A673 (cell line): ENCODE measurements at regions of chr5 and their contacts with region 1.

Region 1: DNA sequence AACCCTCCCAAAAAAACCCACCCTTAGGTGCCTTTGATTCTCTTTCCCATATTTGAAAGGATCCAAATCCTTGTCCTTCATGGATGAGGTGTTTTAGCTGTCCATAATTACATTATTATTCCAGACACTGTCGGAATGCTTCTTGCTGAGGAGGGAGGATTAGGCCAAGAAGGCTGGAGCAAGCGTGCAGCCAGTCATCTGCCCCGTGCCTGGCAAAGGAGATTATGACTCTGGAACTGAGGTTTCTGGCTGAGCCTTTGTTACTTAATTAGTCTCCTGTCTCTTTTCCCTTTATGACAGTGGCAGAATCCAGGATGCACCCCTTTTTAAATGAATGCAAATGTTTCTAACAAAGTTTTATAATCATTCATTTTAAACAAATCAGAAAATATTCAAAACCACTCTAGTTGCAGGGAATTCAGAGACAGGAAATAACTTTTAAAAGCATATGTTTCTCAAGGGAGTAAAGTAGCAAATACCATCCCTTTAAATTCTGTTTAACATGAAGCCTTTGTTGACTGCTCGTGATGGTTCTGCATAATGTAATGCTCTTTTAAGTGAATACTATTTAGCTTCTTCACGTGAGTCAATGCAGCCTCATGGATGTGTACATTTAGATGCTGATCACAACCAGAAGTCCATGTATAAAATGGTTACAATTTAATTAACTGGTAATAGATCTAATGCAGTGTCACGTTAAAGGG is 69.8 kb downstream of the GALNT10 start:
- DNase-seq: peak; percentile 93
- H3K4me3 ChIP-seq: no peak overlapping the region
- H3K27ac ChIP-seq: no peak overlapping the region
- H3K4me1 ChIP-seq: peaks cover 17% of the 10 kb centered on the region
- H3K27me3 ChIP-seq: peaks cover 16% of the 10 kb centered on the region
- CTCF ChIP-seq: no peak

Region 2: GRCh38 chr5:154077696-154078095 is 182.7 kb before region 1 on chr5:
- CTCF ChIA-PET with region 1: no interaction called
- POLR2A ChIA-PET with region 1: no interaction called
- intact Hi-C with region 1: loop called (anchors 5 kb)
- DNase-seq: no peak
- H3K4me3 ChIP-seq: no peak overlapping the region
- H3K27ac ChIP-seq: no peak overlapping the region
- H3K4me1 ChIP-seq: peaks cover 37% of the 10 kb centered on the region
- H3K27me3 ChIP-seq: no peaks in the 10 kb centered on the region
- CTCF ChIP-seq: no peak

Region 3: DNA sequence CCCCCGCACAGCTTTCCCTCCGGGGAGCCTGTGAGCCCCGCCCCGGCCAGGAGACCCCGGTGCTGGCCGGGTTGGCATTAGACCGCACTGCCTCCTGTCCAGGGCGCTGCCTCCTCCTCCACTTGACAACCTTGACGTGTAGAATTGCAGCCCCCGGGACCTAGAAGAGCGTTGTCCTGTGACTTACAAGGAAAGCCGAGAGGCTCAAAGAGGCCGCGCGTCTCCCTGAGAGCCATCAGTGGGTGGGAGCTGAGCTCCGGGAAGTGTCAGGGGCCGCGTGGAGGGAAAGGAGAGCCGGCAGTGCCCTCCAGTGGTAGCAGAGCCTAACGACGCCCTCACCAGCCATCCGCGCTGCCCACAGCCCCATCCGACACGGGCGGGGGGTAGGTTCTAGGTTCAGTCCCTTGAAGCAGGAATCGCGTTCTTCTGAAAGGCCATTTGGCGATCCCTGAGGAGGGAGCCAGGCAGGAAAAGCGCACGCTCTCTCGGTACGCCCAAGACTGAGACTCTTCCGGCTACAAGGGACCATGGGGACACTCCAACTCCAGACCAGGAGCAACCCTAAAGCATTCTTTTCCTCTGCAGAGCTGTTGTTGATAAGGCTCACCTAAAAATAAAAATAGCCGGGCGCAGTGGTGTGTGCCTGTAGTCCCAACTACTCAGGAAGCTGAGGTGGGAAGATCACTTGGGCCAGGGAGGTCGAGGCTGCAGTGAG is 144.9 kb after region 1 on chr5:
- CTCF ChIA-PET with region 1: no interaction called
- POLR2A ChIA-PET with region 1: no interaction called
- intact Hi-C with region 1: loop called (anchors 5 kb)
- DNase-seq: peak; percentile 85
- H3K4me3 ChIP-seq: peak overlapping the region; percentile 32
- H3K27ac ChIP-seq: no peak overlapping the region
- H3K4me1 ChIP-seq: no peaks in the 10 kb centered on the region
- H3K27me3 ChIP-seq: no peaks in the 10 kb centered on the region
- CTCF ChIP-seq: peak; percentile 77